ENCODE measurements at regions of chr5 and their contacts with region 1.

Region 1: DNA sequence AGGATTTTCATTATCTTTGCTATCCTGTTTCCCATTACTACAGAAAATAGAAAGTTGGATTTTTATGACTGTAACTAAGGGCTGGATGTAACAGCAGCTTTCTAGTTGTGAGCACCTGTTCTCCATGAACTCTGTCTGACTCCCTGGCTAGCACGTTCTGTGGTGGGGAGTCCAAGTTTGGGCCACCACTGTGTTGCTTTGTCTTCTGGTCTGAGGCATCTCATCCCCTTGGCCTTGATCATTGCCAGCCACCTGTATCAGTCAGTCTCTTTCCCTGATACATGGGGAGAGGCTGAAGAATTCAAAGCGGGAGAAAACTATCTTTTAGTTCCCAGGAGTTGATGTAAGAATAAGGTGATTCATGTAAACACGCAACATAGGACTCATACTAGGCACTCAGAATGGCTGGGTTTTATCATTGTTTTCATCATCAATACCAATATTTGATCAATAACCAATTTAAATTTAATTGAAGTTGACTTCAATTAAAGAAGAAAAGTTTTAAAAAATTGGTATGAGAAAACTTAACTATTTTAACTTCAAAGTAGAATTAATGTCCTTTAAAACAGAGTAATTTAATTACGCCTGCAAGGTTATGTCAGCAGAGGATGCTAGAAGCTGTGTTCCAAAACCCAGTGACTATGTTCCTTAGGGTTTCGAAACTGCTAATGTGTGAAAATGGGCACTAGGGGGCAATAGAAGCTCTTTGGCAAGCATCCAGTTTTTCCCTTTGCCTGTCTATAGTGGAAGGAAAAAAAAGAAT is 33.6 kb downstream of the WDR70 start:
- DNase-seq: peak; percentile 79 to 85 (median 80)
- H3K4me3 ChIP-seq: no peak overlapping the region
- H3K27ac ChIP-seq: no peak overlapping the region
- H3K4me1 ChIP-seq: no peaks in the 10 kb centered on the region
- H3K27me3 ChIP-seq: no peaks in the 10 kb centered on the region

Region 2: GRCh38 chr5:37400501-37400900 is 12.2 kb before region 1 on chr5:
- CTCF ChIA-PET with region 1: interaction called, 12 read pairs
- POLR2A ChIA-PET with region 1: no interaction called
- DNase-seq: no peak
- H3K4me3 ChIP-seq: no peak overlapping the region
- H3K27ac ChIP-seq: no peak overlapping the region
- H3K4me1 ChIP-seq: peaks cover 0 to 3% (median 0%) of the 10 kb centered on the region in 4 experiments
- H3K27me3 ChIP-seq: no peaks in the 10 kb centered on the region

Region 3: DNA sequence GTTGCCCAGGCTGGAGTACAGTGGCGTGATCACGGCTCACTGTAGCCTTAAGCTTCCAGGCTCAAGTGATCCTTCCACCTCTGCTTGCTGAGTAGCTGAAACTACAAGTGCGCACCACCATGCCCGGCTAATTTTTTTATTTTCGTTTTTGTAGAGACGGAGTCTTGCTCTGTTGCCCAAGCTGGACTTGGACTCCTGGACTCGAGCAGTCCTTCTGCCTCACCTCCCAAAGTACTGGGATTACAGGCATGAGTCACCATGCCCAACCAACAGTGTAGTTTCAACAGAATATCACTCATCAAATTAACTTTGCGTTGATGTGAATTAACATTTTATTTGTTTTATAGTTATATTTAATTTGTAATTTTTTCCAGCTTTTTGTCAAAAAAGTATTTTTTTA is 11.7 kb after region 1 on chr5:
- CTCF ChIA-PET with region 1: interaction called, 17 read pairs
- POLR2A ChIA-PET with region 1: no interaction called
- DNase-seq: no peak
- H3K4me3 ChIP-seq: no peak overlapping the region
- H3K27ac ChIP-seq: no peak overlapping the region
- H3K4me1 ChIP-seq: no peaks in the 10 kb centered on the region
- H3K27me3 ChIP-seq: no peaks in the 10 kb centered on the region